ENCODE measurements at regions of chr7 and their contacts with region 1.

Region 1: GRCh38 chr7:135169141-135169960 is 1.2 kb downstream of the CYREN start:
- DNase-seq: peak in 1 of 4 donors; percentile 73
- ATAC-seq: no peak
- H3K4me3 ChIP-seq: peak overlapping the region; percentile 57 to 85
- H3K27ac ChIP-seq: peak overlapping the region; percentile 92 to 100
- H3K4me1 ChIP-seq: peaks cover 8 to 65% of the 10 kb centered on the region in 2 donors
- H3K27me3 ChIP-seq: no peaks in the 10 kb centered on the region
- CTCF ChIP-seq: peak; percentile 10 to 37

Region 2: DNA sequence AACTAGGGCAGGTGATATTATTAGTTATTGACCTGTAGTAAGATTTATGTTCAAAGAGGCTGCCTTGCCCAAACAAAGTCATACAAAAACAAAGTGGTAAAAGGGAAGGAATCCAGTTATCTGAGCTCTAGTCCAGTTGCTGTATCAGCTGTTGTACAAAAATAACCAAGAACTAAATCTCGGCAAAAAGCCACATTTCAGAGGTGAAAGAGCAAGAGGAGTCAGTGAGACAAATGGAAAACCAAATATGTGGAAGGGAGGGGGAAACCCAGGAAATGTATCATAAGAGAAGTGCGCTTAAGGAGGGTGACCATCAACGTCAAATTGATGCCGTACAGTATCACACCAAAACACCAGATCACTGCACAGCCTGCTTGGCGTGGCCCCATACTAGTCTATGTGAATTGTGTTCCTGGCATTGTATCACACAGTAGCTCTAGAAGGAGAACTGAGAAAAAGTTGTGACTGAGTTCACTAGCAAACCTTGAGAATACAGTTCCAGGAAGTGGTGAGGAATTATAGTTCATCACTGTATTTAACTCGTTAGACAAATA is 176.6 kb before region 1 on chr7:
- intact Hi-C with region 1: loop called in 1 of 2 experiments (anchors 10 kb)
- DNase-seq: no peak
- ATAC-seq: no peak
- H3K4me3 ChIP-seq: no peak overlapping the region
- H3K27ac ChIP-seq: no peak overlapping the region
- H3K4me1 ChIP-seq: peaks cover 3 to 9% of the 10 kb centered on the region in 2 donors
- H3K27me3 ChIP-seq: no peaks in the 10 kb centered on the region
- CTCF ChIP-seq: no peak

Region 3: GRCh38 chr7:135102372-135102771 is 67.0 kb before region 1 on chr7:
- intact Hi-C with region 1: no loop called
- DNase-seq: no peak
- ATAC-seq: no peak
- H3K4me3 ChIP-seq: no peak overlapping the region
- H3K27ac ChIP-seq: no peak overlapping the region
- H3K4me1 ChIP-seq: no peaks in the 10 kb centered on the region
- H3K27me3 ChIP-seq: no peaks in the 10 kb centered on the region
- CTCF ChIP-seq: no peak

Region 4: GRCh38 chr7:135121868-135122267 is 47.5 kb before region 1 on chr7:
- intact Hi-C with region 1: no loop called
- DNase-seq: peak in 1 of 4 donors; percentile 18
- ATAC-seq: no peak
- H3K4me3 ChIP-seq: no peak overlapping the region
- H3K27ac ChIP-seq: no peak overlapping the region
- H3K4me1 ChIP-seq: no peaks in the 10 kb centered on the region
- H3K27me3 ChIP-seq: no peaks in the 10 kb centered on the region
- CTCF ChIP-seq: no peak

Measured in left lung (tissue), 14 donors.